ENCODE measurements at regions of chr6 and their contacts with region 1.

Region 1: GRCh38 chr6:131532580-131533039 is 40.4 kb upstream of the ARG1 start:
- DNase-seq: no peak
- H3K4me3 Mint-ChIP-seq: no peak overlapping the region
- H3K27ac Mint-ChIP-seq: no peak overlapping the region
- H3K4me1 Mint-ChIP-seq: peaks cover 58% of the 10 kb centered on the region
- H3K27me3 Mint-ChIP-seq: no peaks in the 10 kb centered on the region

Region 2: GRCh38 chr6:130885392-130886192 is 647.0 kb before region 1 on chr6:
- CTCF ChIA-PET with region 1: interaction called, 40 read pairs
- DNase-seq: peak; percentile 82
- H3K4me3 Mint-ChIP-seq: no peak overlapping the region
- H3K27ac Mint-ChIP-seq: no peak overlapping the region
- H3K4me1 Mint-ChIP-seq: no peaks in the 10 kb centered on the region
- H3K27me3 Mint-ChIP-seq: no peaks in the 10 kb centered on the region

Region 3: DNA sequence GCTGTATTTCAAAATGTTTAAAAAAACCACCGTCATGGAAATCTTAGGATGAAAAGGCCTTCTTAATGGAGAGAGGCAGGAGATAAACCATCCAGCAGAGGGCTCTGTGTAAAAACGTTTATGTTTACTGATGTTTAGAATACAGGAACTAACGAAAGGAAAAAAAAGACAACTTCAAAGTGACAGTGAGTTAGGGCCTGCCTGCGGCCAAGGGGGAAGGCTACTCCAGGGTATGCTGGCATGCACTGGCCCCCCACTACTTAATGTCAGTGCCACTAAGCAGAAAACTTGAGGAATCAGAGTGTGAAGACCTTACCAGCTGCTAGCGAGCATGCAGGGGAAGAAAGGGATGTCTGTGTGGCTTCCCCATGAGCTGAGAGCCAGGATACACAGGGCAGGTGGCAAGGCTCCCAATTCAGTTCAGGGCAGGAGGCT is 349.6 kb before region 1 on chr6:
- CTCF ChIA-PET with region 1: interaction called, 53 read pairs
- DNase-seq: peak; percentile 46
- H3K4me3 Mint-ChIP-seq: no peak overlapping the region
- H3K27ac Mint-ChIP-seq: peak overlapping the region; percentile 85
- H3K4me1 Mint-ChIP-seq: peaks cover 11% of the 10 kb centered on the region
- H3K27me3 Mint-ChIP-seq: no peaks in the 10 kb centered on the region

Region 4: GRCh38 chr6:131199568-131200272 is 332.9 kb before region 1 on chr6:
- CTCF ChIA-PET with region 1: interaction called, 102 read pairs
- DNase-seq: peak; percentile 85
- H3K4me3 Mint-ChIP-seq: peak overlapping the region; percentile 72
- H3K27ac Mint-ChIP-seq: peak overlapping the region; percentile 97
- H3K4me1 Mint-ChIP-seq: peaks cover 63% of the 10 kb centered on the region
- H3K27me3 Mint-ChIP-seq: no peaks in the 10 kb centered on the region

Region 5: GRCh38 chr6:131431718-131432117 is 100.9 kb before region 1 on chr6:
- CTCF ChIA-PET with region 1: no interaction called
- DNase-seq: no peak
- H3K4me3 Mint-ChIP-seq: no peak overlapping the region
- H3K27ac Mint-ChIP-seq: no peak overlapping the region
- H3K4me1 Mint-ChIP-seq: peaks cover 12% of the 10 kb centered on the region
- H3K27me3 Mint-ChIP-seq: no peaks in the 10 kb centered on the region

Region 6: DNA sequence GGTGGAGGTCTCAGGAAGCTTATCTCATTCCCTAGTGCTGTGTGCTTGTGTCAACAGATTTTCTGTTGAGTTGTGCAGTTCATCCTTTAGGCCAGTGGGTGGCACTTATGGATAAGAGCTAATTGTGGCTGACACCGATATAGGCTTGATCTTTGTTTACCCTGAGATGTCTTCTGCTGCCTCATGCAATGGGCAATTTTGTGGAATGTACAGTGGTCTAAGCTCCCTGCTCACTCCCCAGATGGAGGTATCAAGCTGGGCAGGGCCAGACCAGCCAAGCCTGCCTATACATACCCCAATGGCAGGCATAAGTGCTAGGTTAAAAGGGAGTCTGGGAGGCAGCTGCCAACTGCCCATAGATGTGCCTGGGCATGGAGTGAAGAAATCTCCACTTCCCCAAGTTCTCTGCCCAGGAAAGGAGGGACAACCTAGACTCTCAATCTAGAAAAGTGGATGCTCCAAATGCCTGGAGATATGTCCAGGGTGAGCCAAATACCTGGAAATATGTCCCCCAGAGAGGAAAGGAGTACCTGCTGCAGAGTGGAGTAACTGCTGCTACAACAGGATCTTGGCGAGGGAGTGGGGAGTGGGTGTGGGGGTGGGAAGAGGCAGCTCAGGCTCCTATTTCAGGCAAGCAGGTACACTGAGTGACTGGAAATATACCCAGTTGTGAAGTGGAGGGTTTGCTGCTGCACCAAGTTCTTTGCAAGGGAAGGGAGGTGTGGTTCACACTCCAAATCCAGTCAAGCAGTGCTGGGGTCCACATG is 12.8 kb before region 1 on chr6:
- CTCF ChIA-PET with region 1: interaction called, 59 read pairs
- DNase-seq: peak; percentile 65
- H3K4me3 Mint-ChIP-seq: no peak overlapping the region
- H3K27ac Mint-ChIP-seq: no peak overlapping the region
- H3K4me1 Mint-ChIP-seq: peaks cover 17% of the 10 kb centered on the region
- H3K27me3 Mint-ChIP-seq: no peaks in the 10 kb centered on the region

Region 7: DNA sequence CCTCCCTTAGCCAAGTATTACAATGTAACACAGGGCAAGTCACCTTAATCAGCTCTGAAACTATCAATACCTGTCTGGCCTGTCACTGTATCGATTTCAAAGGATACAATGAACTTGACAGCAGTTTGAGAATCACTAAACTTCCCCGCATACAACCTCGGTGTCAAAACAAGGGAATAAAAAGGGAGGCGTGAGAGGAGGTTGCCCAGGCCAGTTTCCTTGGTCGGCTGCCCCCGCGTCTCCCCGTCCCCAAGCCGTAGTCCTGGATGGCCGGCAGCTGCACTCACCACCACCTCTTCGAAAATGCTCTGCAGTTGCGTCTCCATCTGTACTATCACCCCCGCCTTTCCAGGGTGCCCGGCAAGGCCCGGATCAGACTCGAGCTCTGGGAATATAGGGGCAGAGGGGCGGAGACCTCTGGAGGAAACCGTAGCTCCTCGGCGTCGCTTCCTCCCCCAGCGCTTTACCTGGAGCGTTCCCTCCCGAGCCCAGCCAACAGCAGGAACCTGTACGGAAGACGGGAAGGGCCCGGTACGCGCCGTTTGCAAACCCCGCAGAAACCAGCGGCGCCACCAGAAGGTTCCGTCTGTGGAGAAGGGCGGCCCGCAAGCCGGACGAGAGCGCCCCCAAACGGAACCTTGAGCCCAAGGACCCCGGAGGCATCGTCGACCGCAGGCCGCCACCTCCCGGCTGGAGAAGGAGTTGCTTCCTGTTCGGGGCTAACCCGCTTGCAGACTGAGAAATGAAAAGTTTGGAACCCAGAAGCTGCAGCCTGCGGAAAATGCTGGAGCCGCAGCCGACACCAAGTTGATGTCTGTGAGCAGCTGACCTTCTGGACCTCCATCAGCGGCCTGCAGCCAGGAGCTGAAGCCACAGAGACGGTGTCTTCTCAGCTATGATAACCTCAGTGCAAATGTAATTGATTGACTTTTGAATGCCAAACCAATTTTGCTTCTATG is 95.4 kb after region 1 on chr6 and contains the start of gene MED23:
- CTCF ChIA-PET with region 1: interaction called, 11 read pairs
- DNase-seq: peak; percentile 94
- H3K4me3 Mint-ChIP-seq: peak within 1 kb of the TSS; percentile 98
- H3K27ac Mint-ChIP-seq: peak within 1 kb of the TSS; percentile 96
- H3K4me1 Mint-ChIP-seq: peaks cover 31% of the 10 kb centered on the region
- H3K27me3 Mint-ChIP-seq: peaks cover 6% of the 10 kb centered on the region